CD4-positive, alpha-beta memory T cell (primary cell): ENCODE measurements at regions of chr17 and their contacts with region 1.

Region 1: DNA sequence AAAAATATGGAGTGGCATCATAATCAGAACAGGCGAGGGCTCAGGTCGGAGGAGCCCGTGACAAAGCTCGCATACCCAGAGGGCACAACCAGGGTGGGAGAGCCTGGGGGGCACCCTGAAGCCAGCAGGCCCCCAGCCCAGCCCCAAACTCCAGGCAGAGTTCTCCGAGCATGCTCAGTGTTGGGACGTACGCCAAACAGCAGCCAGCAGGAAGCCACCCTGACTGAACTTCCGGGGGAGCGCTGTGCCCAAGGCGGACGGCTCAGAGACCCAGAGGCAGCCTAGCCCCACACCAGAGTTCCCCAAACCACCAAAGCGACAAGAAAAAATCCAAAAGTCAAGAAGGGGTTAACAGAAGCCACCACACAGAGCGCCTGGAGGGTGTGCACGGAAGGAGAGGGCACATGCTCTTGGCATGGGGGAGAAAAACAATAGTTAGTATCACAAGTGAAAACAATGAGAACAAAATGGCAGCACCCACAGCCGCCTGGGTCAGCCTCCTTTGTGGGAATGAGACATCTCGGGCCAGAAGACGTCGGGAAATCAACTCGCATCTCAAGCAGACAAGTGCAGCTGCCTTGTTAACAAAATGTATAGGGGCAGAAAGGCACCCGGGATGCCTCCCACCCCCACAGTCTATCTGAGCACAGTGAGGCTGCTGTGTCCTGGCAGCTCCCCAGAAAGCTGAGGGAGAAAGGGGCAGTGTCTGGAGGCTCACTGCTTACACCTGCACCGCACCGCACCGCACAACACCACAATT is 11.9 kb downstream of the EXOC7 start:
- DNase-seq: peak in 1 of 5 donors; percentile 20
- H3K4me3 ChIP-seq: no peak overlapping the region
- H3K4me3 Mint-ChIP-seq: peak overlapping the region in 5 of 8 donors; percentile 44 to 65 (median 57)
- H3K27ac ChIP-seq: no peak overlapping the region
- H3K27ac Mint-ChIP-seq: peak overlapping the region in 5 of 7 donors; percentile 36 to 92 (median 79)
- H3K4me1 ChIP-seq: no peaks in the 10 kb centered on the region
- H3K4me1 Mint-ChIP-seq: peaks cover 1 to 15% (median 3%) of the 10 kb centered on the region in 4 donors
- H3K27me3 ChIP-seq: no peaks in the 10 kb centered on the region
- H3K27me3 Mint-ChIP-seq: no peaks in the 10 kb centered on the region

Region 2: GRCh38 chr17:76079956-76080767 is 11.5 kb before region 1 on chr17:
- CTCF ChIA-PET with region 1: interaction called, 4 read pairs
- POLR2A ChIA-PET with region 1: interaction called, 13 read pairs
- intact Hi-C with region 1: no loop called
- DNase-seq: no peak
- H3K4me3 ChIP-seq: no peak overlapping the region
- H3K4me3 Mint-ChIP-seq: peak overlapping the region in 1 of 8 donors; percentile 16
- H3K27ac ChIP-seq: no peak overlapping the region
- H3K27ac Mint-ChIP-seq: peak overlapping the region in 3 of 7 donors; percentile 22 to 56 (median 29)
- H3K4me1 ChIP-seq: peaks cover 33% of the 10 kb centered on the region
- H3K4me1 Mint-ChIP-seq: peaks cover 20 to 49% (median 35%) of the 10 kb centered on the region in 4 donors
- H3K27me3 ChIP-seq: peaks cover 24% of the 10 kb centered on the region
- H3K27me3 Mint-ChIP-seq: peaks cover 11 to 12% of the 10 kb centered on the region in 2 donors

Region 3: DNA sequence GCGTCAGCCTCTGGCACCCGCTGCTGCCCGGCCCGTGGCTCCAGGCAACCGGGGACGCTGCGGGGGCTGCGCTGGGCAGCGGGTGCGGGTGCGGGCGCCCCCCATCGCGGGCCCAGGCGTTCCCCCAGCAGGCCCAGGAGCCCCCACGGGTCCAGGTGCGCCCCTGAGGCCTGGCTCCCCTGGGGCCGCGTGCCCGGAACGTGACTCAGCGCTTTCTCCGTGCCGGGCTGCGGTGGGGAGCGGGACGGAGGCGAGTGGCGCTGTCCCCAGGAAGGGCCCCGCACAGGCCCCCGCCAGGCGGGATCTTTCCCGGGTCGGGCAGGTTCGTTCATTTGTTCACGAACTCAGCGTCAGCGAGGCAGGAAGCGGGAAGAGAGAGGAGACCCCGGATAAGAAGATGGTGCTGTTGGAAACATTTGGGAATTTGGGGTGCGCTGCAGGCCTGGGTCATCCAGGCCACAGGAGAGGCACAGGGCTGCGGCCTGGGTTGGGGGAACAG is 30.3 kb after region 1 on chr17:
- CTCF ChIA-PET with region 1: no interaction called
- POLR2A ChIA-PET with region 1: no interaction called
- intact Hi-C with region 1: no loop called
- DNase-seq: no peak
- H3K4me3 ChIP-seq: peak overlapping the region in 1 of 2 donors; percentile 60
- H3K4me3 Mint-ChIP-seq: peak overlapping the region in 4 of 8 donors; percentile 21 to 49 (median 37)
- H3K27ac ChIP-seq: peak overlapping the region; percentile 29
- H3K27ac Mint-ChIP-seq: peak overlapping the region in 6 of 7 donors; percentile 21 to 86 (median 65)
- H3K4me1 ChIP-seq: peaks cover 10% of the 10 kb centered on the region
- H3K4me1 Mint-ChIP-seq: peaks cover 4 to 12% (median 8%) of the 10 kb centered on the region in 4 donors
- H3K27me3 ChIP-seq: no peaks in the 10 kb centered on the region
- H3K27me3 Mint-ChIP-seq: no peaks in the 10 kb centered on the region